ENCODE measurements at regions of chr2 and their contacts with region 1.

Region 1: GRCh38 chr2:23926750-23927571 is at the start of gene ATAD2B:
- DNase-seq: peak; percentile 95
- ATAC-seq: peak; percentile 87
- H3K4me3 Mint-ChIP-seq: peak within 1 kb of the TSS; percentile 98
- H3K27ac Mint-ChIP-seq: peak within 1 kb of the TSS; percentile 99
- H3K4me1 Mint-ChIP-seq: peaks cover 32% of the 10 kb centered on the region
- H3K27me3 Mint-ChIP-seq: no peaks in the 10 kb centered on the region
- total RNA-seq, gene ATAD2B: 18.2 to 26.8 TPM

Region 2: DNA sequence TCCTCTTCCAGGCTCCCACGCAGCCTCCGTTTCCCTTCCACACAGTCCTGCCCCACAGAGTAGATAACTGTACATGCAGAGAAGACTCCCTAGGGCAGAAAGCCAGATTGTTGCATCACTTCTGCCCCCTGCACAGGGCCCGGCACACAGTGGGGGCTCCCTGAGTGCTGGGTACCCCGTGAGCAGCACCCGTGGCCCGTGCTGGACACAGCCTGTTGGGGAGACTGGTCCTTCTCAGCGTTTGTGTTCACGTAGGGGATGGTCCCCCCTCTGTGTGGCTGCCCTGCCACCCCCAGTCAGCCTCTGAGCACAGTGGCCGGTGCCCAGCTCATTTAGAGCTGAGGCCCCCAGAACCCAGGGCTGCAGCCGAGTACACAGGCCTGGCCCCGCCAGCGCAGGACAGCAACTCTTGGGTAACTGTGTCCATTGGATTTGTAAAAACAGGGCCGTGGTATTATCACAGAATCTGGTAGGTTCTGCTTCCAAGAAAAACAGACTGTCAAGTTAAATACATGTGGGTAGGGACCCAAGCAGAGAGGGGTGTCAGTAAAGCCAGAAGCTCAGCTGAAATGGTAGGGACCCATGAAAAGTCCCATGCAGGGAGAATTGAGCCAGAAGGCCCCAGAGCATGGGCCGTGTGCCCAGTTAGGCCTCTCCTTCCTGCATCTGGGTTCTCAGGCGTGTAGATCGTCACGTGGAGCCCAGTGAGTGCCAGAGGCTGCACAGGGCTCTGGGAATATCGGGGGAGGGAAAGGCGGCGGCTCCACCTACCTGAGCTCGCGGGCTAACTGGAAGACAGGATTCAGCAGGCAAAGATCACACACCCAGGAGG is 257.3 kb before region 1 on chr2:
- CTCF ChIA-PET with region 1: no interaction called
- DNase-seq: no peak
- ATAC-seq: no peak
- H3K4me3 Mint-ChIP-seq: no peak overlapping the region
- H3K27ac Mint-ChIP-seq: no peak overlapping the region
- H3K4me1 Mint-ChIP-seq: no peaks in the 10 kb centered on the region
- H3K27me3 Mint-ChIP-seq: no peaks in the 10 kb centered on the region

Region 3: GRCh38 chr2:23824777-23825212 is 102.2 kb before region 1 on chr2:
- CTCF ChIA-PET with region 1: interaction called, 54 read pairs
- DNase-seq: no peak
- ATAC-seq: peak; percentile 65
- H3K4me3 Mint-ChIP-seq: no peak overlapping the region
- H3K27ac Mint-ChIP-seq: no peak overlapping the region
- H3K4me1 Mint-ChIP-seq: peaks cover 7% of the 10 kb centered on the region
- H3K27me3 Mint-ChIP-seq: no peaks in the 10 kb centered on the region

Region 4: DNA sequence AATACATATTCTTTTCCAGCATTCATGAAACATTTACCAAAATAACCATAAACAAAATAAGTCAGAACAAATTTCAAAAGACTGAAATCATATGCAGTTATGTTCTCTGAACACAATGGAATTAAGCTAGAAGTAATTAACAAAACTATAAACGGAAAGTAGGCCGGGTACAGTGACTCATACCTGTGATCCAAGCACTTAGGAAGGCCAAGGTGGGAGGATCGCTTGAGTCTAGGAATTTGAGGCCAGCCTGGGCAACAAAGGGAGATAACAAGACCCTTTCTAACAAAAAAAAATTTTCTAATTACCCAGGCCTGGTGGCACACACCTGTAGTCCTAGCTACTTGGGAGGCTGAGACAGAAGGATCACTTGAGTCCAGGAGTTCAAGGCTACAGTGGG is 14.9 kb before region 1 on chr2:
- CTCF ChIA-PET with region 1: interaction called, 13 read pairs
- DNase-seq: no peak
- ATAC-seq: no peak
- H3K4me3 Mint-ChIP-seq: no peak overlapping the region
- H3K27ac Mint-ChIP-seq: no peak overlapping the region
- H3K4me1 Mint-ChIP-seq: peaks cover 11% of the 10 kb centered on the region
- H3K27me3 Mint-ChIP-seq: no peaks in the 10 kb centered on the region

Region 5: GRCh38 chr2:23939987-23940717 is 13.2 kb after region 1 on chr2 and contains the start of gene UBXN2A:
- CTCF ChIA-PET with region 1: interaction called, 66 read pairs
- DNase-seq: peak; percentile 78
- ATAC-seq: peak; percentile 91
- H3K4me3 Mint-ChIP-seq: peak within 1 kb of the TSS; percentile 86
- H3K27ac Mint-ChIP-seq: peak within 1 kb of the TSS; percentile 93
- H3K4me1 Mint-ChIP-seq: peaks cover 25% of the 10 kb centered on the region
- H3K27me3 Mint-ChIP-seq: peaks cover 14% of the 10 kb centered on the region
- total RNA-seq, gene UBXN2A: 10.5 to 13.1 TPM

Region 6: GRCh38 chr2:23954325-23955014 is 27.5 kb after region 1 on chr2:
- CTCF ChIA-PET with region 1: no interaction called
- DNase-seq: no peak
- ATAC-seq: no peak
- H3K4me3 Mint-ChIP-seq: no peak overlapping the region
- H3K27ac Mint-ChIP-seq: no peak overlapping the region
- H3K4me1 Mint-ChIP-seq: peaks cover 5% of the 10 kb centered on the region
- H3K27me3 Mint-ChIP-seq: no peaks in the 10 kb centered on the region

Region 7: DNA sequence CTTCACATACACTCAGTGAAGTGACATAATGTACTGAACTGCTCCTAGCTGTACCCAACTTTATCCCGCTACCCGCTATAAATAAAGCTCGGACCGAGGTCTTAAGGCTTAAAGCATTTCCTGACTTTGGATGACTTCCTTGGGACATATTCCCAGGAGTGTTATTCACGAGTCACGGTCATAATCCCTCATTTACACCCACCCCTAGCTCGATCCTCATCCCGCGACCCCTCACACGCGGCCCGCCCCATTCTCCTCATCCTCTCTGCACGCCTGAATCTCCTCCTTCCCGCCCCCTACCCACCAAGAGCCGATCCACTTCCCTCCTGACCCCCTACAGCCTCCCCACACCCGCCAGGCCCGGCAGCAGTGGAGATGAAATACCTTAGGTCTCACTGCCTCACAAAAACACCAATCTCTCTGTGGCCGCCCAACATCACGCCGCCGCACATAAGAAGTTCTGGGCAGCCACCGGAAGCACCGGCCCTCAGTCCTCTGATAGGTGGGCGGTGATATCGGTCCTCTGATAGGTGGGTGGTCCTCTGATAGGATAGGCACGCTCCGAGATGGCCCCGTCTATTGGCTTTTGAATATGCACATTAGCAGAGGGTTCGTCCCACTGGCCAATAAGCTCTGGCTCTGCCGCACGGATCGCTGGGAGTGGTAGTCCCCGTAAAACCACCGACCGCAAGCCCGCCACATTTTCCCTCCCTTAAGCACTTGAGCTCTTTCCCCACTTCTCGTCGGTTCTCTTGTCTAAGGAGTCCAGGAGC is 120.2 kb after region 1 on chr2 and contains the start of gene WDCP:
- CTCF ChIA-PET with region 1: interaction called, 14 read pairs
- DNase-seq: peak; percentile 98
- ATAC-seq: peak; percentile 98
- H3K4me3 Mint-ChIP-seq: peak within 1 kb of the TSS; percentile 97
- H3K27ac Mint-ChIP-seq: peak within 1 kb of the TSS; percentile 86
- H3K4me1 Mint-ChIP-seq: peaks cover 32% of the 10 kb centered on the region
- H3K27me3 Mint-ChIP-seq: peaks cover 2% of the 10 kb centered on the region
- total RNA-seq, gene WDCP: 22.8 to 26.5 TPM

Region 8: DNA sequence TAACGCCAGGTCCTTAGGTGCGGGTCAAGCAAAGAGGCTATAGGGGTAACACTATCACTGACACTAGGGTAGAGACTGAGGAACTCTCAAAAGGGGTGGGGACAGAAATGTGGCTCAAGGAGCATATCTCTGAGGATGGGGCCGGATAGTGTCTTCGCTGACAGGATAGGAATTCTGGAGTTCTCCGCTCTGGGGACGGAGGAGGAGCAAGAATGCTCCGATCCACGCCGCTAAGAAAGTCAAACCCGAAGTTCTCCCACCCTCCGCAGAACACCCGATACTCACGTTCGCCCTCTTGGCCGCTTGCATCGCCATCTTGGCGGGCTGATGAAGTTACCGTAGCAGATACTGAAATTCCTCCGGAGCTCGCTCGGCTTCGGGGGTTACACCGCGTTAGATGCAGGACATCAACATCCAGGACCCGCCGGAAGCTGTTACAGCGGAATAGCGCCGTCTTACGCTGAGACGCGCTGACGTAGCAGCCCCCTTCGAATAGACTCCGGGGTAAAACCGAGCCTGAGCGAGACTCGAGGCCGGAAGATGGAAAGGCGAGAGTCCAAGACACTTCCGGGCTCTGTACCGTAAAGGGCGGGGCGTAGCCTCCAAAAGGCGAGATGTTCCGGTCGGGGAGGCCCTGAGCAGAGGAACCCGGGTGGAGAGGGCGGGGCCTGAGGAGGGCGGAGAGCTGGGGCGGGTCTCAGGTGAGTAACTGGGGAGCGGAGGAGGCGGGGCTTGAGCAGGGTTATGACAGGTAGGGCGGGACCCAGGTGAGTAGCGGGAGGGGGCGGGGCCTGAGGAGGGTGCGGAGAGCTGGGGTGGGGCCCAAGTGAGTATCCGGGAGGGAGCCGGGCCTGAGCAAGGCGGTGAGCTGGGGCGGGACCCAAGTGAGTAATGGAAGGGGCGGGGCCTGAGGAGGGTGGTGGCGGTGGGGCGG is 149.2 kb after region 1 on chr2 and contains the start of gene SF3B6:
- CTCF ChIA-PET with region 1: interaction called, 22 read pairs
- DNase-seq: peak; percentile 100
- ATAC-seq: peak; percentile 87
- H3K4me3 Mint-ChIP-seq: peak within 1 kb of the TSS; percentile 90
- H3K27ac Mint-ChIP-seq: peak within 1 kb of the TSS; percentile 96
- H3K4me1 Mint-ChIP-seq: peaks cover 38% of the 10 kb centered on the region
- H3K27me3 Mint-ChIP-seq: no peaks in the 10 kb centered on the region
- total RNA-seq, gene SF3B6: 85.4 to 115 TPM

Region 9: GRCh38 chr2:24084386-24085361 is 157.7 kb after region 1 on chr2 and contains the start of gene TP53I3:
- CTCF ChIA-PET with region 1: interaction called, 48 read pairs
- DNase-seq: peak; percentile 85
- ATAC-seq: peak; percentile 97
- H3K4me3 Mint-ChIP-seq: peak within 1 kb of the TSS; percentile 83
- H3K27ac Mint-ChIP-seq: peak within 1 kb of the TSS; percentile 86
- H3K4me1 Mint-ChIP-seq: peaks cover 19% of the 10 kb centered on the region
- H3K27me3 Mint-ChIP-seq: no peaks in the 10 kb centered on the region
- total RNA-seq, gene TP53I3: 3.6 to 6.3 TPM